ENCODE measurements at regions of chr6 and their contacts with region 1.

Region 1: GRCh38 chr6:37018198-37019064 is 13.0 kb downstream of the FGD2 start:
- DNase-seq: peak; percentile 72
- ATAC-seq: peak; percentile 95
- H3K4me3 Mint-ChIP-seq: no peak overlapping the region
- H3K27ac Mint-ChIP-seq: peak overlapping the region; percentile 73
- H3K4me1 Mint-ChIP-seq: peaks cover 31% of the 10 kb centered on the region
- H3K27me3 Mint-ChIP-seq: no peaks in the 10 kb centered on the region
- CTCF ChIP-seq: peak; percentile 83

Region 2: GRCh38 chr6:36765594-36766398 is 252.6 kb before region 1 on chr6:
- CTCF ChIA-PET with region 1: interaction called, 60 read pairs
- POLR2A ChIA-PET with region 1: interaction called, 9 read pairs
- intact Hi-C with region 1: loop called (anchors 1 kb)
- DNase-seq: peak; percentile 66
- ATAC-seq: peak; percentile 92
- H3K4me3 Mint-ChIP-seq: peak overlapping the region; percentile 44
- H3K27ac Mint-ChIP-seq: peak overlapping the region; percentile 24
- H3K4me1 Mint-ChIP-seq: peaks cover 48% of the 10 kb centered on the region
- H3K27me3 Mint-ChIP-seq: no peaks in the 10 kb centered on the region
- CTCF ChIP-seq: peak; percentile 63

Region 3: DNA sequence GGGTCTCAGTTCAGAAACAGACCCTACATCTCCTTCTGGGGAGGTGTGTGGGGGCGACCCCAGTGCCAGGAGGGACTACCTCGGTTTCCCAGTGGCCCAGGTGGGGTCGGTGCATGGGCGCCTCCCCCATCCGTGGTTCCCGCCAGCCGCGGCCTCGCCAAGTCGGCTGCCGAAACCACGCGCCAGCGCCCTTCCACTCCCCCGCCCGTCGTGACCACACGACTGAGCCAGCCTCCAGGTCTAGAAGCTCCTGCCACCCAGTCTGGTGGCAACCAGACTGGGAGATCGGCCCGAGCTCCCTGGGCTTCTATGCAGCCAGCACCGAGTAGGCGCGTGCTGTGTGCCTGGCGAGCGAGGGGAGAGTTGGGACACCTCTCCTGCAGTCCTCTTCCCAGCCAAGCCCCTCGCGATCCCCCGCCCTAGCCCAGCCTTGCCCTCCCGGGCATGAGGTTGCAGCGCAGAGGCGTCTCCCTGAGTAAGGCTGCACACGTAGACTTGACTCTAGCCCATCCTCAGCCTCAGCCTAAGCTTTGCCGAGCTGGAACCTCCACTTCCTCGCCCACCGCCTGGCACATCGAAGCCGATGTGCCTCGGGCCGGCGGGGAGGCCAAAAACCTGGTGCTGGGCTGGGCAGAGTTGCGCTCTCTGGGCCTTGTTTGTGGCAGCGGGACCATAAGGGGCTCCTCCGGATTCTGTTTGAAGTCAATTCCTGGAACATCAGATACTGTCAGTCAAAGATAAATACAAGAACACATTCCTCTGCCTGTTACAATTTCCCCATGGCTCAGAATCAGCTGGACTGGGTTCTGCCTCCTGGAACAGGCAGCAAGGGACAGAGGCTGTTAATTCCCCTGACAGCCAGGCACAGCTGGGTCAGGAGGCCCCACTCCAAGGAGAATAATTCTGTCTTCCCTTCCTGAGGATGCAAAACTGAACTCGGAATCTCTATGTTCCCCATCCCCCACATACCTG is 177.7 kb before region 1 on chr6:
- CTCF ChIA-PET with region 1: no interaction called
- POLR2A ChIA-PET with region 1: no interaction called
- intact Hi-C with region 1: no loop called
- DNase-seq: no peak
- ATAC-seq: peak; percentile 61
- H3K4me3 Mint-ChIP-seq: peak overlapping the region; percentile 81
- H3K27ac Mint-ChIP-seq: no peak overlapping the region
- H3K4me1 Mint-ChIP-seq: peaks cover 15% of the 10 kb centered on the region
- H3K27me3 Mint-ChIP-seq: peaks cover 26% of the 10 kb centered on the region
- CTCF ChIP-seq: no peak

Region 4: DNA sequence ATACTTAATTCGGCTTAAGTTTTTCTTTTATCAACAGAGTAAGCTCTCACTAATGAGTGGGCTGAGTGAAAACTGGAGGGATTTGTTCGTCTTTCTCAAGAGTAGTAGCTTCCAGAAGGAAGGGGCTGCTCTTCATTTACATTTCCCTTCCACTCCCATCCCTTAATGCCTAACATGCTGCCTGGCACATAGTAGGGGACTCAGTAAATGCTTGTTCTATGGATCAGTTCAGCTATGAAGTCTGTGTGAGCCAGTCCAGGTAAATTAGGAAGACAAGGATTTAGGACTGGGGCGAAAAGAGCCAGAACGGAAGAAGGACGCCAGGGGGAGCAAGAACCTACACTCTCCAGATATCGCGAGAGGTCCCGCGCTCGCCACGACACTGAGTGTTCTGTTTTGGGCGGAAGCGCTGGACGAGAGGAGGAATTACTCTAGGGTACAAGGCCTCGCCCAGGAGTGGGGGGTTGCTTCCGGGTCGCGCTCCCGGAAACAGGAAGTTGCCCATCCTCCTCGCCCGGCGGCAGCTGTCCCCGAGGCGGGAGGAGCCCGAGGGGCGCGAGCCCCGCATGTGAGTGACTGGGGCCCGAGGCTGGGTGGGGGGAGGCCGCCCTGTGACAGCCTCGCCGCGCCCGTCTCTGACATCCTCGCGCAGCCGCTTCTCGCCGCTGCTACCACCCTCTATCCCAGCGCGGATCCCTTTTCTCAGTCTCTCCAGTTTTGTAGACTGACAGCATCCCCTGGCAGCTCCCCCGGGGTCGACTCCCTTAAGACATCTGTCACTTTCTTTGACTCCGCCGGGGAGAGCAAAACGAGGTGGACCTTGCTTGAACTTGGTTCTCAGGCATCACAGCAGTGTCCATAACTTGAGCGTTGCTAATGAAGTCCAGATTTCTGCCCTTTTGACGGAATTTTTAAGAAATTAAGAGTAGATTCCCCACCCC is 132.7 kb before region 1 on chr6 and contains the start of gene C6orf89:
- CTCF ChIA-PET with region 1: interaction called, 34 read pairs
- POLR2A ChIA-PET with region 1: interaction called, 10 read pairs
- intact Hi-C with region 1: loop called (anchors 1 kb)
- DNase-seq: peak; percentile 89
- ATAC-seq: peak; percentile 99
- H3K4me3 Mint-ChIP-seq: peak within 1 kb of the TSS; percentile 89
- H3K27ac Mint-ChIP-seq: peak within 1 kb of the TSS; percentile 94
- H3K4me1 Mint-ChIP-seq: peaks cover 30% of the 10 kb centered on the region
- H3K27me3 Mint-ChIP-seq: no peaks in the 10 kb centered on the region
- CTCF ChIP-seq: peak; percentile 34
- total RNA-seq, gene C6orf89: 29.7 and 30.3 TPM in 2 replicates

Region 5: DNA sequence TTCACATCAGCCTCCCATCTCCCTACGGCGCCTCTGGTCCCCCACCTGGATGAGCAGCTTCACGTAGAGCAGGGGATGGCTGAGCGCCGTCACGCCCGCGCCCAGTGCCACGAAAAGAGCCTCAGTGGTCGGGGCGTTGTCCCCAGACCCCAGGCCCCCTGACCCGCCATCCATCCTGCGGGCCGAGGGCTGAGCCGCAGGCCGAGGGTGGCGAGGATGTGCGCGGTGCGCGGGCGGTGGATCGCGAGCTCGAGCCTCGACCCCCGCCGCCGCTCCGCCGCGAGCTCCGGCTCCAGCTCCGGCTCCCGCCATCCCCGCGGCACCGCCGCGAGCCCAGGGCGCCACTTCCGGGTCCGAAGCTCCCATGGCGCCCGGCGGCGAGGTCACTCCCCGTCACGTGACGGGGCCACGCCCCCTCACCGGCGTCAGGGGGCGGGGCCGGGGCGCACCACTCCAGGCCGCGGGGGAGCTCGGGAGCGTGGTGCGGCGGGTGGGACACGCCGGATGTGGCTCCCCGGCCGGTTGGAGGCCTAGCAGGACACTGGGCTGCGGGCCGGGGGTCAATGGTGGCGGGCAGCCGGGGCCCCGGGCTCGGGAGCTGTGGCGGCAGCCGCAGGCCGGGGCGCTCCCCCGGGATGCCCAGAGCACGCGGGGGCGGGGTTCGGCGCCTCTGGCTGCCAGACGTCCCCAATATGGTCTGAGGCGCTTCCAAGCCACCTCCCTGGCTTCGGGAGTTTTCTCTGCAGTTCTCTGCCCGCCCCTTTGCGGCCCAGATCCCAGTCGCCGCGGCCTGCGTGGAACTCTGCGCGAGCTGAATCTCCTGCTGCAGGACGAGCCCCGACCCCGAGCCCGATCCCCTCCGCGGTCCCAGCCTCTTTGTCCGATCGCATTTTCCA is 32.4 kb before region 1 on chr6 and contains the start of gene MTCH1:
- CTCF ChIA-PET with region 1: interaction called, 167 read pairs
- POLR2A ChIA-PET with region 1: interaction called, 30 read pairs
- intact Hi-C with region 1: no loop called
- DNase-seq: peak; percentile 96
- ATAC-seq: peak; percentile 87
- H3K4me3 Mint-ChIP-seq: peak within 1 kb of the TSS; percentile 96
- H3K27ac Mint-ChIP-seq: peak within 1 kb of the TSS; percentile 91
- H3K4me1 Mint-ChIP-seq: peaks cover 20% of the 10 kb centered on the region
- H3K27me3 Mint-ChIP-seq: no peaks in the 10 kb centered on the region
- CTCF ChIP-seq: no peak
- total RNA-seq, gene MTCH1: 128 and 133 TPM in 2 replicates

Region 6: GRCh38 chr6:37137201-37138090 is 119.0 kb after region 1 on chr6:
- CTCF ChIA-PET with region 1: no interaction called
- POLR2A ChIA-PET with region 1: no interaction called
- intact Hi-C with region 1: no loop called
- DNase-seq: no peak
- ATAC-seq: peak; percentile 75
- H3K4me3 Mint-ChIP-seq: peak overlapping the region; percentile 47
- H3K27ac Mint-ChIP-seq: peak overlapping the region; percentile 73
- H3K4me1 Mint-ChIP-seq: peaks cover 28% of the 10 kb centered on the region
- H3K27me3 Mint-ChIP-seq: no peaks in the 10 kb centered on the region
- CTCF ChIP-seq: no peak

Region 7: DNA sequence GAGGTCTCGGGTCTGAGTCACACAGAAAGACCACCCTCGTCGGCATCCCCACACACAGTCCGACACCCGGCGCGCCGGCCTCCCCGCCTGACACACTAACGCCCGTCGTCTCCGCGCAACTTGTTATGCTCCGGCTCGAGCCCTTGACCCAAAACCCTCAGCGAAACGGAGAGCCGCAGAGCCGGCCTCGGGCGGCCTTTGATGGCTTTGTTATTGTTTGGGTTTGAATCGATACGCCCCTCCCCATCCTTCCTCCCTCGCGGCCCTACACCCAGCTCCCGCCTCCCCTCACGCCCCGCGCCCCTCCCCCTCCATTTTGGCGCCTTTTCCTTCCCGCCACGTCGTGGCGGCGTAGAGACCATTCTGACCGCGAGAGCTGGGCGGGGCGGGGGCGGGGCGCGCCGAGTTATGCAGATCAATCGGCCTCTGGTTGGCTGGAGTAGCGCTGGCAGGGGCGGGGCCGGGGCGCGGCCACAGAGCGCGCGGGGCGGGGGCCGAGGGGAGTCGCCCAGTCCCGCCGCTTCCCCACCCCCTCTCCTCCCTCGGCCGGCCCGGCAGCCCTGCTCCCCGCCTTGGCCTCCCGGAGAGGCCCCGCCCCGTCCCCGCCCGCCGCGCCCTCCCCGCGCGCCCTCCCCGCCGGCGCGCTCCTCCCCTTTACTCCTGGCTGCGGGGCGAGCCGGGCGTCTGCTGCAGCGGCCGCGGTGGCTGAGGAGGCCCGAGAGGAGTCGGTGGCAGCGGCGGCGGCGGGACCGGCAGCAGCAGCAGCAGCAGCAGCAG is 151.3 kb after region 1 on chr6 and contains the start of gene PIM1:
- CTCF ChIA-PET with region 1: interaction called, 91 read pairs
- POLR2A ChIA-PET with region 1: interaction called, 438 read pairs
- intact Hi-C with region 1: loop called (anchors 1 kb)
- DNase-seq: peak; percentile 88
- ATAC-seq: peak; percentile 84
- H3K4me3 Mint-ChIP-seq: peak within 1 kb of the TSS; percentile 95
- H3K27ac Mint-ChIP-seq: peak within 1 kb of the TSS; percentile 96
- H3K4me1 Mint-ChIP-seq: peaks cover 47% of the 10 kb centered on the region
- H3K27me3 Mint-ChIP-seq: no peaks in the 10 kb centered on the region
- CTCF ChIP-seq: no peak
- total RNA-seq, gene PIM1: 272 and 283 TPM in 2 replicates

Region 8: GRCh38 chr6:37207903-37208456 is 189.5 kb after region 1 on chr6:
- CTCF ChIA-PET with region 1: interaction called, 185 read pairs
- POLR2A ChIA-PET with region 1: interaction called, 30 read pairs
- intact Hi-C with region 1: loop called (anchors 1 kb)
- DNase-seq: peak; percentile 79
- ATAC-seq: peak; percentile 97
- H3K4me3 Mint-ChIP-seq: no peak overlapping the region
- H3K27ac Mint-ChIP-seq: peak overlapping the region; percentile 5
- H3K4me1 Mint-ChIP-seq: peaks cover 20% of the 10 kb centered on the region
- H3K27me3 Mint-ChIP-seq: no peaks in the 10 kb centered on the region
- CTCF ChIP-seq: no peak

Region 9: DNA sequence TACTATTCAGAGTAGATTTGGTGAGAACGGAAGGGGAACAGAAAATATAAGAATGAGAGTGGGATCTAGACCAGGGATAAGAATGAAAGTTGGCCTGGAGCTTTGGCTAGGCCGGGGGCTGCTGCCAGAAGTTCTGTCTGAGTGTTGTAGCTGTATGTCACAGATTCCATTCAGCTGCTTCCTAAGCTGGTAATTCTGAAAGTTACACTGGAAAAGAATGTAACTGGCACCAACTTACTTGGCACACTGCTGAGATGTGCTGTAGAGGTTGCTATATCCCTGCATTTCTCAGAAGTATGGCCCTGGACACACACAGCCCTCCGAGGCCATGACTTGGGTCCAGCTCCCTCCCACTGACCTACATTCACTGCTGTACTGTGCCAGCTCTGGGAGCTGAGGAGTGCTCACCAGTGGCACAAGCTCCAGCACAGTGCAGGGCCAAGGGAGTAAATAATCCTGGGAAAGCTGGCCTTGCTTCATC is 265.3 kb after region 1 on chr6:
- CTCF ChIA-PET with region 1: no interaction called
- POLR2A ChIA-PET with region 1: no interaction called
- intact Hi-C with region 1: no loop called
- DNase-seq: no peak
- ATAC-seq: no peak
- H3K4me3 Mint-ChIP-seq: no peak overlapping the region
- H3K27ac Mint-ChIP-seq: no peak overlapping the region
- H3K4me1 Mint-ChIP-seq: peaks cover 10% of the 10 kb centered on the region
- H3K27me3 Mint-ChIP-seq: no peaks in the 10 kb centered on the region
- CTCF ChIP-seq: no peak